ENCODE measurements at regions of chrX and their contacts with region 1.

Region 1: GRCh38 chrX:151151665-151152267 is 24.6 kb upstream of the GPR50 start:
- DNase-seq: peak; percentile 71
- H3K4me3 Mint-ChIP-seq: no peak overlapping the region
- H3K27ac Mint-ChIP-seq: no peak overlapping the region
- H3K4me1 Mint-ChIP-seq: peaks cover 5% of the 10 kb centered on the region
- H3K27me3 Mint-ChIP-seq: peaks cover 36% of the 10 kb centered on the region
- CTCF ChIP-seq: peak; percentile 61

Region 2: GRCh38 chrX:150772150-150772970 is 379.4 kb before region 1 on chrX:
- CTCF ChIA-PET with region 1: interaction called, 7 read pairs
- POLR2A ChIA-PET with region 1: no interaction called
- intact Hi-C with region 1: loop called (anchors 5 kb)
- DNase-seq: peak; percentile 81
- H3K4me3 Mint-ChIP-seq: no peak overlapping the region
- H3K27ac Mint-ChIP-seq: peak overlapping the region; percentile 20
- H3K4me1 Mint-ChIP-seq: peaks cover 7% of the 10 kb centered on the region
- H3K27me3 Mint-ChIP-seq: no peaks in the 10 kb centered on the region
- CTCF ChIP-seq: peak; percentile 87

Region 3: GRCh38 chrX:151268836-151269235 is 117.1 kb after region 1 on chrX:
- CTCF ChIA-PET with region 1: no interaction called
- POLR2A ChIA-PET with region 1: no interaction called
- intact Hi-C with region 1: no loop called
- DNase-seq: no peak
- H3K4me3 Mint-ChIP-seq: no peak overlapping the region
- H3K27ac Mint-ChIP-seq: no peak overlapping the region
- H3K4me1 Mint-ChIP-seq: no peaks in the 10 kb centered on the region
- H3K27me3 Mint-ChIP-seq: no peaks in the 10 kb centered on the region
- CTCF ChIP-seq: no peak

Region 4: GRCh38 chrX:151488677-151489076 is 336.9 kb after region 1 on chrX:
- CTCF ChIA-PET with region 1: interaction called, 3 read pairs
- POLR2A ChIA-PET with region 1: no interaction called
- intact Hi-C with region 1: loop called (anchors 1 kb)
- DNase-seq: peak; percentile 26
- H3K4me3 Mint-ChIP-seq: no peak overlapping the region
- H3K27ac Mint-ChIP-seq: no peak overlapping the region
- H3K4me1 Mint-ChIP-seq: no peaks in the 10 kb centered on the region
- H3K27me3 Mint-ChIP-seq: no peaks in the 10 kb centered on the region
- CTCF ChIP-seq: no peak

Region 5: DNA sequence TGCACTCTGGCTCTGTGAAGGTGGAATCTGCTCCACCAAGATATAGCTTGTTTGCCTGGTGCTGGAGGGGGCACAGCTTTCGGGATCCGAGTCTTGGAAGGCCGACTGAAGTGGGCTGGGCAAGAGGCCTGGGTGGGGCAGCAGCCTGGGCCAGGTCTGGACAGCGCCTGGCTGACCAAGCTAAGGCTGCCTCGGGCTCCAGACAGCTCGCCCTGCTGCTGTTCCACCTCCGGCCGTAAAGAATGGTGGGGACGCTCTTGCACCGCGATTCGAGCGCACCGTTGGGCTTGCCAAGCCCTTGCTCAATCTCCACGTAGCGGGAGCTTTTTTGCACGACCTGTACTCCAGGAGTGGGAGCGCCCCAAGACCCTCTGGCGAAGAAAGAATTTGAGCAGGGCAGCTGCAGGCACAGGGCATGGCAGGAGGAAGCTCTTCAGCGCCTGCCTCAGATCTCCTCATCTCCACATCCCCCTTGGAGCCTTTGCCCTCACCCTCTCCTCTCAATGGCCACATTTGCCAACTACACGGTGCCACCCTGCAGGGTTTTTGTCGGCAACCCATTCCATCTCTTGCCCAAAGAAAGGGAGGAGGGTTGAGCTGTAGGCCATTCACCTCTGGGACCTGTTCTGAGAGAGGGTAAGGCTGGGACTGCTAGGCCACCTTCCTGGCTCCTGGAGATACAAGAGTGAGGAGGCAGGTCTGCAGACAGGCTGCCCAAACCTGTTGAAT is 601.7 kb after region 1 on chrX:
- CTCF ChIA-PET with region 1: interaction called, 8 read pairs
- POLR2A ChIA-PET with region 1: no interaction called
- intact Hi-C with region 1: loop called (anchors 5 kb)
- DNase-seq: peak; percentile 73
- H3K4me3 Mint-ChIP-seq: peak overlapping the region; percentile 36
- H3K27ac Mint-ChIP-seq: peak overlapping the region; percentile 11
- H3K4me1 Mint-ChIP-seq: peaks cover 12% of the 10 kb centered on the region
- H3K27me3 Mint-ChIP-seq: no peaks in the 10 kb centered on the region
- CTCF ChIP-seq: peak; percentile 78

Region 6: GRCh38 chrX:152926279-152926678 is 1774.5 kb after region 1 on chrX:
- CTCF ChIA-PET with region 1: no interaction called
- POLR2A ChIA-PET with region 1: no interaction called
- intact Hi-C with region 1: loop called (anchors 5 kb)
- DNase-seq: peak; percentile 87
- H3K4me3 Mint-ChIP-seq: no peak overlapping the region
- H3K27ac Mint-ChIP-seq: no peak overlapping the region
- H3K4me1 Mint-ChIP-seq: no peaks in the 10 kb centered on the region
- H3K27me3 Mint-ChIP-seq: no peaks in the 10 kb centered on the region
- CTCF ChIP-seq: peak; percentile 38

Measured in MCF 10A (cell line).